ENCODE measurements at regions of chr10 and their contacts with region 1.

Region 1: GRCh38 chr10:101840741-101841453 is 2.7 kb downstream of the KCNIP2 start:
- DNase-seq: peak; percentile 79
- H3K27ac ChIP-seq: no peak overlapping the region
- CTCF ChIP-seq: peak; percentile 91

Region 2: GRCh38 chr10:101725296-101726115 is 115.4 kb before region 1 on chr10:
- CTCF ChIA-PET with region 1: no interaction called
- POLR2A ChIA-PET with region 1: no interaction called
- DNase-seq: no peak
- H3K27ac ChIP-seq: no peak overlapping the region
- CTCF ChIP-seq: no peak

Region 3: GRCh38 chr10:101818119-101818871 is 22.6 kb before region 1 on chr10 and contains the start of gene OGA:
- CTCF ChIA-PET with region 1: interaction called, 10 read pairs
- POLR2A ChIA-PET with region 1: no interaction called
- DNase-seq: peak; percentile 100
- H3K27ac ChIP-seq: peak within 1 kb of the TSS; percentile 95
- CTCF ChIP-seq: no peak

Region 4: GRCh38 chr10:101879456-101880231 is 38.7 kb after region 1 on chr10:
- CTCF ChIA-PET with region 1: interaction called, 22 read pairs
- POLR2A ChIA-PET with region 1: no interaction called
- DNase-seq: no peak
- H3K27ac ChIP-seq: no peak overlapping the region
- CTCF ChIP-seq: no peak

Region 5: GRCh38 chr10:102009801-102010425 is 169.0 kb after region 1 on chr10:
- CTCF ChIA-PET with region 1: interaction called, 67 read pairs
- POLR2A ChIA-PET with region 1: interaction called, 3 read pairs
- DNase-seq: peak; percentile 91
- H3K27ac ChIP-seq: no peak overlapping the region
- CTCF ChIP-seq: peak; percentile 95

Region 6: GRCh38 chr10:102133373-102134195 is 292.7 kb after region 1 on chr10:
- CTCF ChIA-PET with region 1: interaction called, 10 read pairs
- POLR2A ChIA-PET with region 1: no interaction called
- DNase-seq: peak; percentile 91
- H3K27ac ChIP-seq: peak overlapping the region; percentile 91
- CTCF ChIP-seq: no peak